Mammary epithelial cell (primary cell): ENCODE measurements at regions of chr7 and their contacts with region 1.

Region 1: GRCh38 chr7:3393862-3394261 is 92.8 kb downstream of the SDK1 start:
- DNase-seq: peak; percentile 3
- H3K4me3 ChIP-seq: no peak overlapping the region
- H3K27ac ChIP-seq: no peak overlapping the region
- H3K4me1 ChIP-seq: no peaks in the 10 kb centered on the region
- H3K27me3 ChIP-seq: no peaks in the 10 kb centered on the region
- CTCF ChIP-seq: peak in 1 of 2 donors; percentile 4

Region 2: DNA sequence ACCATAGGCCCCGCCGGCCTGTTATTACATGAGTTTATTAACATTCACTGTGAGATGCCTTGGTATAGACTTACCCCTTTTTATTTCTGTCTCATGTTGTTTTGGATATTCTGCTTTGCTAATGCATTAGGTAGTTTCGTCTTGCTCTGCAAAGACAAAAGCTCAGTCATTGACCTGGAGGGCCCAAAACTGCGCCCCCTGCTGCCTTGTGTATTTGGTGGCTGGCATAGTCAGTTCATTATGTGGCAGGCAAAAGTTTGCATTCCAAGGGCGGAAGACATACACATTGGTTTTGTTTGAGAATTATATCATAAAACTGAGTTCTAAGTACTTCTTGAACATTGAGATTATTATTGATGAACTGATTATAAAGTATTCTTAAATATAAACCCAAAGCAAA is 279.7 kb after region 1 on chr7:
- CTCF ChIA-PET with region 1: no interaction called
- dilution Hi-C with region 1: no loop called
- in situ Hi-C with region 1: no loop called
- intact Hi-C with region 1: loop called (anchors 5 kb)
- DNase-seq: no peak
- H3K4me3 ChIP-seq: no peak overlapping the region
- H3K27ac ChIP-seq: no peak overlapping the region
- H3K4me1 ChIP-seq: no peaks in the 10 kb centered on the region
- H3K27me3 ChIP-seq: no peaks in the 10 kb centered on the region
- CTCF ChIP-seq: peak in 1 of 2 donors; percentile 14